Upper lobe of right lung (tissue), 1 donor: ENCODE measurements at regions of chr11 and their contacts with region 1.

Region 1: GRCh38 chr11:35617687-35618496 is at the start of gene FJX1:
- DNase-seq: peak; percentile 73
- ATAC-seq: peak; percentile 67
- H3K4me3 ChIP-seq: peak within 1 kb of the TSS; percentile 59
- H3K27ac ChIP-seq: peak within 1 kb of the TSS; percentile 58
- H3K4me1 ChIP-seq: peaks cover 19% of the 10 kb centered on the region
- H3K27me3 ChIP-seq: peaks cover 32% of the 10 kb centered on the region
- CTCF ChIP-seq: no peak
- total RNA-seq, gene FJX1: 5.9 TPM

Region 2: GRCh38 chr11:35541621-35542375 is 76.1 kb before region 1 on chr11:
- intact Hi-C with region 1: no loop called
- DNase-seq: no peak
- ATAC-seq: peak; percentile 31
- H3K4me3 ChIP-seq: no peak overlapping the region
- H3K27ac ChIP-seq: no peak overlapping the region
- H3K4me1 ChIP-seq: no peaks in the 10 kb centered on the region
- H3K27me3 ChIP-seq: no peaks in the 10 kb centered on the region
- CTCF ChIP-seq: no peak

Region 3: GRCh38 chr11:35800970-35801953 is 183.4 kb after region 1 on chr11:
- intact Hi-C with region 1: loop called (anchors 10 kb)
- DNase-seq: no peak
- ATAC-seq: peak; percentile 73
- H3K4me3 ChIP-seq: no peak overlapping the region
- H3K27ac ChIP-seq: no peak overlapping the region
- H3K4me1 ChIP-seq: peaks cover 2% of the 10 kb centered on the region
- H3K27me3 ChIP-seq: no peaks in the 10 kb centered on the region
- CTCF ChIP-seq: no peak

Region 4: DNA sequence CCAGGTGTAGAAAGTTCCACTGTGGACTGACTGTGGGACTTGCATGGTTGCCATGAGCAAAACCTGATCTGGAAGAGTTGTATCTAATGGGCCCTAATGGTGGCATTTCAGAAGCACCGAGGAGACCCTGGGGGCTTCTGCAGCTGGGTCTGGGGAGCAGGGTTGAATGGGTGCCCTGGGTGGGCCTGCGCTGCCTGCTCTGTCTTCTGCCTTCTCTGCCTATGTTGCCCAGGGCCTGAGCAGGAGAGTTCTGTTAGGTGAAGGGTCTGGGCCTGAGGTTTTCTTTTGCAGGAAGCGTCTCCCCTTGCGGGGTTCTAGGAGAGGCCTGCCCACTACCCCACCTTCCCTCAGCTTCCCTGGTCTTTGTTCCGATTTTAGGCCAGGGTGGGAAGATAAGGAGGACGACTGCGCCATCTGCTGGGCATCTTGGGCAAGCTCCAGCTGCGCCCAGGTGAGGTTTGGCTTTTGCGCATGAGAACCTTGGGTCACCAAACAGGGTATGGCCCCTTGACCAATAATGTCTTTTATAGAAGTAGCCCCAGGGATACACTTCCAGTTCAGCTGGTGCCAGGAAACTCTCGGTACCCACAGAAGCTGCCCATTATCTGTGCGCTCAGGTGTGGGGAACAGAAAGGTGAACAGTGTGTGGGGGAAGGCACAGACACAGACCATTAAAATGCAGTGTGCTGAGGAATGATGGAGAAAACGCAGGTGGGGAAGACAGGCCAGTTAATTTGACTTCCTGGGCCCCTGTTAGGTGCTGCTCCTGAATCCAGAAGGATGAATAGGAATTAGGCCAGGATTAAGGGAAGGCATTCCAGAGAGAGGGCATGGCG is 648.1 kb after region 1 on chr11:
- intact Hi-C with region 1: loop called (anchors 5 kb)
- DNase-seq: peak; percentile 75
- ATAC-seq: peak; percentile 81
- H3K4me3 ChIP-seq: no peak overlapping the region
- H3K27ac ChIP-seq: no peak overlapping the region
- H3K4me1 ChIP-seq: no peaks in the 10 kb centered on the region
- H3K27me3 ChIP-seq: no peaks in the 10 kb centered on the region
- CTCF ChIP-seq: peak; percentile 88